GM12878 (cell line): ENCODE measurements at regions of chr5 and their contacts with region 1.

Region 1: DNA sequence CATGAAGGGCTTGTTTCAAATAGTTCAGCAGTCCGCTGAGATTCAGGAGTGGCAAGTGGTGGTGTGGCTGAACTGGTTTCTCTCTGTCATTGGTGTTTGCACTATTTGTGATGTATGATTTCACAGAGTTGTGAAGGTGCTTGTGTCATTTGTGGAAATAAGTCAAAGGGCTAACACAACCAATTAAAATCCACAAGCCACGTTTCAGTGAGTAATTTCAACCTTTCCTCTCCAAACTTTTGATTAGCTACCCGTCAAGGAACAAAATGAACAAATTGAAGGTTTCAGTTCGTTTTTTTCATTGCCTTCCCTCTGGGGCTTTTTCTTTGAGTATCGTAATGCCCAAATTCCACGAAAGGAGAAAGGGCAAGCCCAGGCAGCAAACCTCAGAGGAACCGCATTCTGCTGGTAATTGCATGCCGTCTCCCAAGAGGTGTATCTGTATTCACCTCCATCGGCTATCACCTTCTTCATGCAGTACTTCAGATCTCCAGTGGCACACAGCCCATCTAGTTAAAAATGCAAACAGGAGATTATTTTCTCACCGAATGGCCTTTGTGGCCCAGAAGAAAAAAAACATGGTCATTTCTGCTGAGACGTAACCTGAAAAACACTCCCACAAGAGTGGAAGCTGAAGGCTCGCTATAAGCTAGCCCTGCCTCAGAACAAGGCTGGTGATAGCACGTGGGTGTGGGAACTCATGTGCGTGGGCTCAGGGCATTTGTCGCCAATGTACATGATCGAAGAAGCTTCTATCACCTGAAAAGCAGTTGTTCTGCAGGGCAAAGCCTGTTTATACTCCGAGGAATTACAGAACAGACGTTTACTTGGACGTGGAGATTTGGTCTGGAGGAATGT is 197.1 kb downstream of the NR3C1 start:
- DNase-seq: peak; percentile 98
- ATAC-seq: peak; percentile 71
- H3K4me3 ChIP-seq: peak overlapping the region; percentile 21; the same call in 1 of the 2 replicates
- H3K27ac ChIP-seq: peak overlapping the region; percentile 94
- H3K4me1 ChIP-seq: peaks cover 52% of the 10 kb centered on the region
- H3K27me3 ChIP-seq: no peaks in the 10 kb centered on the region
- CTCF ChIP-seq: peak in 1 of 3 experiments; percentile 13; a peak in 1 of 6 replicates
- EP300 ChIP-seq: peak; percentile 76 to 91; a peak in 2 of 4 replicates
- POLR2A ChIP-seq: peak; percentile 61; the same call in 1 of the 2 replicates
- RAD21 ChIP-seq: peak; percentile 40

Region 2: DNA sequence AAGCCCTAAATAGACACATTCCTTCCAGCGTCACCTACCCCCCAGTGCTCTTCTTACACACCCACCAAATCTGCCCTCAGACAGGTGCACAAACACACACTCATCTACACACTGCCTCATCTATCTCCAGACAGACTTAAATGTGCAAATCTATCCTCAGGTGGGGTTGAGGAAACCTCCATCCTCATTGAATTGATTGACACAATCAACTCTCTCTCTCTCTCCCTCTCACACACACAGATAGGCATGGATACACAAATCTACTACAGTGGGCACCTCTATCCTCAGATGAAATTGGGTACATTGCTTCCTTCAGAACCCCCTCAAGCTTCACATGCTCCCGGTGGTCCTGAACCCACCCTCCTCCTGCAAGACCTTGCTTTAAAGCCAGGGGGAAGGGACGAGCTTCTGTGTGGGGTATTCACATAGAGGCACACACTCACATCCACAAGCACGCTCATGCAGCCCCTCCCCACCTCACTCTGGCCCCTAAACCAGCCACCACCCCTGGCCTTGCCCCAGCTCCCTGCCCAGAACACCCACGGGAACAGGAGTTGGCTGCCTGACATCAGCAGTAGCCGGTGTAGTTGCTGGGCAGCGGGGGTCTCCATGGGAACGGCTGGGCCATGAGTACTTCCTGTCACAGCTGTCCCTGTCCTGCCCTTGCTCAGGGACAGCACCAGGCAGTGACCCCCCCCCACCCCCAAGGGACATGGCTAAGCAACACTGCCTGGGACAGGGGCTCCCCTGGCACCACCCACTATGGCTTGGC is 1351.0 kb before region 1 on chr5:
- CTCF ChIA-PET with region 1: no interaction called
- POLR2A ChIA-PET with region 1: no interaction called
- RAD21 ChIA-PET with region 1: no interaction called
- SMC1A ChIA-PET with region 1: no interaction called
- in situ Hi-C with region 1: no loop called
- intact Hi-C with region 1: no loop called
- DNase-seq: no peak
- ATAC-seq: no peak
- H3K4me3 ChIP-seq: no peak overlapping the region
- H3K27ac ChIP-seq: no peak overlapping the region
- H3K4me1 ChIP-seq: no peaks in the 10 kb centered on the region
- H3K27me3 ChIP-seq: 0 out of 4 replicates have a peak, but pooled peaks cover 0 to 7% of the 10 kb centered on the region in 2 experiments
- CTCF ChIP-seq: no peak
- EP300 ChIP-seq: no peak
- POLR2A ChIP-seq: no peak
- RAD21 ChIP-seq: no peak

Region 3: GRCh38 chr5:143008809-143009521 is 197.5 kb before region 1 on chr5:
- CTCF ChIA-PET with region 1: interaction called, 21 read pairs
- POLR2A ChIA-PET with region 1: interaction called, 17 read pairs
- RAD21 ChIA-PET with region 1: interaction called, 52 read pairs
- SMC1A ChIA-PET with region 1: interaction called, 62 read pairs
- in situ Hi-C with region 1: no loop called
- intact Hi-C with region 1: loop called (anchors 2 kb)
- DNase-seq: peak; percentile 98
- ATAC-seq: peak; percentile 90
- H3K4me3 ChIP-seq: no peak overlapping the region
- H3K27ac ChIP-seq: peak overlapping the region; percentile 47; the same call in 1 of the 2 replicates
- H3K4me1 ChIP-seq: peaks cover 27% of the 10 kb centered on the region
- H3K27me3 ChIP-seq: no peaks in the 10 kb centered on the region
- CTCF ChIP-seq: peak; percentile 13 to 25 (median 25); a peak in 2 of 6 replicates
- EP300 ChIP-seq: peak; percentile 100
- POLR2A ChIP-seq: no peak
- RAD21 ChIP-seq: 0 out of 2 replicates have a peak, but pooled peaks have one; percentile 30

Region 4: DNA sequence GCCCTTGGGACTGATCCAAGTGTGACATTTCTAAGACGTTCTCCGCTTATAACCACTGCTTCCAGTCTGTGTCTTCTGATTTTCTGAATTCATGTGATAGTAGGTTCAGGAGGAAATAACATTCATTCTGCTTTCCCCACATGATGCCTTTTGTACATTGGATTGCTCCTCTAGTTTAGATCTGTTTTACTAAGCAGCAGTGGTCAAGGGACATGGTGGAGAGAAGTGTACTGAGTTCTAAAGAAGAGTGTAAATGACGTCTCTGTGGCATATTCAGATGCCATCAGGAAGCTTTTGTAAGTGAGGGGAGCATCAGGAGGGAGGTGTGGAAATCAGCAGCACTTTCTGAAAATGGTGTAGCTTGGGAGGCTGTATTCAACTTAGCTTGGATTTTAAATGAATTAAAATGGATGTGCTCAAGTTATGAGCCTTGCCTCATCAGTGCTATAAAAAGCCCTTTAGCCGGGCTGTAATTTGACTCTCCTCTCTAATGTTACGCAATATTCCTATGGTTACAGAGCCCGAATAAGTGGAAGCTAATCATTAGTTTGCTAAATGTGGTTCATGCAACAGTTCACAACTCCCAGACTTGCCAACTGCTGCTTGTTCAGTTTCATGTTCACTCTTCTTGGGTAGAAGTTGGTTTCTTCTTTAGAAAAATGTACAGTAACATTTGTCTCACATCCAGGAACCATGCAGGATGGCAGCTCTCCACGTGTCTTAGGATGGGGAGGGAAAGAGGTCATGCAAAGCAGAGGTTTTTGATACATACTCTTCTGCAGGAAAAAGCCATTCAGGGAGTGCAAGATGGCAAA is 155.0 kb before region 1 on chr5:
- CTCF ChIA-PET with region 1: interaction called, 3 read pairs
- POLR2A ChIA-PET with region 1: interaction called, 16 read pairs
- RAD21 ChIA-PET with region 1: interaction called, 20 read pairs
- SMC1A ChIA-PET with region 1: interaction called, 50 read pairs
- in situ Hi-C with region 1: loop called (anchors 5 kb)
- intact Hi-C with region 1: loop called (anchors 1 kb)
- DNase-seq: no peak
- ATAC-seq: peak; percentile 10
- H3K4me3 ChIP-seq: no peak overlapping the region
- H3K27ac ChIP-seq: no peak overlapping the region; the same call in 1 of the 2 replicates
- H3K4me1 ChIP-seq: peaks cover 38% of the 10 kb centered on the region
- H3K27me3 ChIP-seq: no peaks in the 10 kb centered on the region
- CTCF ChIP-seq: no peak
- EP300 ChIP-seq: no peak
- POLR2A ChIP-seq: no peak
- RAD21 ChIP-seq: no peak

Region 5: GRCh38 chr5:143057580-143057999 is 148.8 kb before region 1 on chr5:
- CTCF ChIA-PET with region 1: interaction called, 5 read pairs
- POLR2A ChIA-PET with region 1: interaction called, 16 read pairs
- RAD21 ChIA-PET with region 1: interaction called, 20 read pairs
- SMC1A ChIA-PET with region 1: interaction called, 50 read pairs
- in situ Hi-C with region 1: loop called (anchors 5 kb)
- intact Hi-C with region 1: loop called (anchors 1 kb)
- DNase-seq: peak; percentile 85
- ATAC-seq: peak; percentile 59
- H3K4me3 ChIP-seq: peak overlapping the region; percentile 77
- H3K27ac ChIP-seq: peak overlapping the region; percentile 100
- H3K4me1 ChIP-seq: peaks cover 56% of the 10 kb centered on the region
- H3K27me3 ChIP-seq: no peaks in the 10 kb centered on the region
- CTCF ChIP-seq: no peak
- EP300 ChIP-seq: peak; percentile 77 to 89; a peak in 3 of 4 replicates
- POLR2A ChIP-seq: peak; percentile 54; the same call in 1 of the 2 replicates
- RAD21 ChIP-seq: peak; percentile 36; the same call in 1 of the 2 replicates

Region 6: DNA sequence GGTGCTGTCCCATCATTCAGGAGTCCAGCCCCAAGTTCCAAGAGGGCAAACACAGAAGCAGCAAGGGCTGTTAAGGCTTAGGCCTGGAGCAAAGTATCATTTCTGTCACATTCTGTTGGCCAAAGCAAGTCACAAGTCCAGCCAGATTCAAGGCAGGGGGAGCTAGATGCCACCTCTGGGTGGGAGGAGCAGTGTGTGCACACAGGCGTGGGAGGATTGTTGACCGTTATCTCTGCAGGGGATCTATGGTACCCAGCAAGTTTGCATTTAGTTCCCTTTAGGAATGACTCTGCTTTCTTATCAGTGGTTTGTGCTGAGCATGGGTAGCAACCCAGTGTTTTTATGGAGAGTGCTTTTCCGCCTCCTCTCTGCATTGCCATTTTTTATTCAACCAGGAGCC is 81.8 kb before region 1 on chr5:
- CTCF ChIA-PET with region 1: interaction called, 3 read pairs
- POLR2A ChIA-PET with region 1: no interaction called
- RAD21 ChIA-PET with region 1: interaction called, 13 read pairs
- SMC1A ChIA-PET with region 1: interaction called, 38 read pairs
- in situ Hi-C with region 1: no loop called
- intact Hi-C with region 1: no loop called
- DNase-seq: peak; percentile 77
- ATAC-seq: peak; percentile 68
- H3K4me3 ChIP-seq: no peak overlapping the region
- H3K27ac ChIP-seq: no peak overlapping the region; the same call in 1 of the 2 replicates
- H3K4me1 ChIP-seq: peaks cover 8% of the 10 kb centered on the region
- H3K27me3 ChIP-seq: no peaks in the 10 kb centered on the region
- CTCF ChIP-seq: no peak
- EP300 ChIP-seq: no peak
- POLR2A ChIP-seq: no peak
- RAD21 ChIP-seq: no peak

Region 7: GRCh38 chr5:143290125-143290524 is 83.7 kb after region 1 on chr5:
- CTCF ChIA-PET with region 1: no interaction called
- POLR2A ChIA-PET with region 1: no interaction called
- RAD21 ChIA-PET with region 1: no interaction called
- SMC1A ChIA-PET with region 1: interaction called, 12 read pairs
- in situ Hi-C with region 1: no loop called
- intact Hi-C with region 1: loop called (anchors 5 kb)
- DNase-seq: no peak
- ATAC-seq: peak; percentile 45; the same call in 2 of the 3 replicates
- H3K4me3 ChIP-seq: no peak overlapping the region
- H3K27ac ChIP-seq: no peak overlapping the region
- H3K4me1 ChIP-seq: no peaks in the 10 kb centered on the region
- H3K27me3 ChIP-seq: no peaks in the 10 kb centered on the region
- CTCF ChIP-seq: no peak
- EP300 ChIP-seq: no peak
- POLR2A ChIP-seq: no peak
- RAD21 ChIP-seq: no peak